ENCODE measurements at regions of chr16 and their contacts with region 1.

Region 1: DNA sequence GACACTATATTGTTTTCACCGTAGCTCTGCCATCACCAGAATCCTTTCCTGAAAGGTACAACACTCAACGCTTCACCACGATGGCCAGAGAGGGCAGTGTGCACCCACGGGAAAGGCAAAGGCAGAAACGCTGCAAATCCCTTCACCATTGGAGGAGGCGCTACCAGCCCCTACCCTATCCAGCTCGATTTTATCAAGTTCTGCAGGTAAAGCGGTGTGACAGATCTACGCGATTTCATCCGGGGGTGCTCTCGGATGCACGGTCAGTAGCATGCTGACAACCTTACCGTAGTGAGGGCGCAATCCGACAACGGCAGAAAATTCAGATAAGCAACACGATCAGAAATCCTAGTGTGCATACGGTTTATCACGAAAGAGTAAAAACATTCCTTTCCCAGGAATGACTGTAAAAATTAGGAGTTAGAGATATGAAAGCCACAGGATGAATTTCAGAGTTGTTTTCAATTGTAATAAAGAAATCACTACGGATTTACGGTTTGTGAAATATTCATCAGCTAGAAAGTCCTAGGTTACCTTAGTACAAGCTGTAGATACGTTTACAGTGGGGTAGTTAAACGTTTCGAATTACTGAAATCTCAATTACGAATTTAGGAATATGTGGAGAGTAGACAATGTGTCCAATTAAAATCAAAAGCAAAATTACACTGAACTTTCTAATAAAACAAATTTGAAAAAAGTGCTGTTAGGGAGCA is 1.8 kb downstream of the NETO2 start:
- DNase-seq: peak; percentile 67 to 90
- ATAC-seq: peak; percentile 69 to 82 (median 73)
- H3K4me3 ChIP-seq: peak overlapping the region; percentile 23
- H3K4me3 Mint-ChIP-seq: peak overlapping the region; percentile 81
- H3K27ac ChIP-seq: no peak overlapping the region
- H3K27ac Mint-ChIP-seq: peak overlapping the region in 1 of 2 donors; percentile 17
- H3K4me1 ChIP-seq: peaks cover 16% of the 10 kb centered on the region
- H3K4me1 Mint-ChIP-seq: peaks cover 19 to 22% of the 10 kb centered on the region in 2 donors
- H3K27me3 ChIP-seq: peaks cover 25% of the 10 kb centered on the region
- H3K27me3 Mint-ChIP-seq: peaks cover 32 to 74% of the 10 kb centered on the region in 2 donors
- CTCF ChIP-seq: peak; percentile 80

Region 2: GRCh38 chr16:47037746-47038458 is 104.0 kb before region 1 on chr16:
- intact Hi-C with region 1: loop called (anchors 5 kb)
- DNase-seq: peak; percentile 87 to 91
- ATAC-seq: peak; percentile 96 to 99 (median 99)
- H3K4me3 ChIP-seq: peak overlapping the region; percentile 36
- H3K4me3 Mint-ChIP-seq: peak overlapping the region; percentile 74
- H3K27ac ChIP-seq: no peak overlapping the region
- H3K27ac Mint-ChIP-seq: no peak overlapping the region
- H3K4me1 ChIP-seq: peaks cover 12% of the 10 kb centered on the region
- H3K4me1 Mint-ChIP-seq: peaks cover 6 to 11% of the 10 kb centered on the region in 2 donors
- H3K27me3 ChIP-seq: peaks cover 22% of the 10 kb centered on the region
- H3K27me3 Mint-ChIP-seq: peaks cover 42 to 58% of the 10 kb centered on the region in 2 donors
- CTCF ChIP-seq: peak; percentile 98

Region 3: GRCh38 chr16:48117217-48118105 is 975.5 kb after region 1 on chr16:
- intact Hi-C with region 1: loop called (anchors 1 kb)
- DNase-seq: peak; percentile 22 to 67
- ATAC-seq: peak in 2 of 3 donors; percentile 56 to 77
- H3K4me3 ChIP-seq: no peak overlapping the region
- H3K4me3 Mint-ChIP-seq: no peak overlapping the region
- H3K27ac ChIP-seq: no peak overlapping the region
- H3K27ac Mint-ChIP-seq: no peak overlapping the region
- H3K4me1 ChIP-seq: no peaks in the 10 kb centered on the region
- H3K4me1 Mint-ChIP-seq: no peaks in the 10 kb centered on the region
- H3K27me3 ChIP-seq: no peaks in the 10 kb centered on the region
- H3K27me3 Mint-ChIP-seq: peaks cover 0 to 7% of the 10 kb centered on the region in 2 donors
- CTCF ChIP-seq: peak; percentile 7

Region 4: GRCh38 chr16:48156790-48157209 is 1014.9 kb after region 1 on chr16:
- intact Hi-C with region 1: loop called (anchors 1 kb)
- DNase-seq: peak; percentile 70 to 83
- ATAC-seq: peak; percentile 47 to 78 (median 71)
- H3K4me3 ChIP-seq: no peak overlapping the region
- H3K4me3 Mint-ChIP-seq: no peak overlapping the region
- H3K27ac ChIP-seq: no peak overlapping the region
- H3K27ac Mint-ChIP-seq: no peak overlapping the region
- H3K4me1 ChIP-seq: peaks cover 6% of the 10 kb centered on the region
- H3K4me1 Mint-ChIP-seq: no peaks in the 10 kb centered on the region
- H3K27me3 ChIP-seq: peaks cover 5% of the 10 kb centered on the region
- H3K27me3 Mint-ChIP-seq: peaks cover 12 to 38% of the 10 kb centered on the region in 2 donors
- CTCF ChIP-seq: peak; percentile 87

Region 5: GRCh38 chr16:48164907-48165726 is 1023.2 kb after region 1 on chr16:
- intact Hi-C with region 1: loop called (anchors 2 kb)
- DNase-seq: peak; percentile 60 to 78
- ATAC-seq: peak; percentile 76 to 90 (median 83)
- H3K4me3 ChIP-seq: no peak overlapping the region
- H3K4me3 Mint-ChIP-seq: no peak overlapping the region
- H3K27ac ChIP-seq: no peak overlapping the region
- H3K27ac Mint-ChIP-seq: no peak overlapping the region
- H3K4me1 ChIP-seq: peaks cover 3% of the 10 kb centered on the region
- H3K4me1 Mint-ChIP-seq: peaks cover 5 to 6% of the 10 kb centered on the region in 2 donors
- H3K27me3 ChIP-seq: no peaks in the 10 kb centered on the region
- H3K27me3 Mint-ChIP-seq: peaks cover 4 to 17% of the 10 kb centered on the region in 2 donors
- CTCF ChIP-seq: peak; percentile 69